PC-3 (cell line): ENCODE measurements at regions of chr4 and their contacts with region 1.

Region 1: DNA sequence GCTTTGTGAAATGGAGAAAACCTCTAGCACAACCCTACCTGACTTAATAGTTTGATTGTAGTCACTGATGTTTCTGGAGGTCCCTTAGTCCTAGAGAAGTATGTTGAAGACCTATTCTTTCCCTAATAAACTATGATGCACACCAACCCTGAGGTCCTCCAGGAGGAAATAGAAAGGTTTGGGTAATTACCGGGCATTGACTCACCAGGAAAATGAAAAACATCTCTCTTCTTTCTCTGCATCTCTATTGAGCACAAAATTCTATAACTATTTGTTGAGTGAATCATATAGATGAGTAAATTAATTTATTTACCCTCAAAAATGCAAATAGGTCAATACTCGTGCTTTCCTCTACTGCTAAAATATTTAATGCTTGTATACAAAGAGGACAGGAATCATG is 582.4 kb upstream of the FAM241A start:
- DNase-seq: peak; percentile 83
- ATAC-seq: peak; percentile 98
- H3K4me3 ChIP-seq: no peak overlapping the region
- H3K27ac ChIP-seq: peak overlapping the region; percentile 92
- H3K4me1 ChIP-seq: peaks cover 20% of the 10 kb centered on the region
- H3K27me3 ChIP-seq: no peaks in the 10 kb centered on the region
- CTCF ChIP-seq: no peak

Region 2: DNA sequence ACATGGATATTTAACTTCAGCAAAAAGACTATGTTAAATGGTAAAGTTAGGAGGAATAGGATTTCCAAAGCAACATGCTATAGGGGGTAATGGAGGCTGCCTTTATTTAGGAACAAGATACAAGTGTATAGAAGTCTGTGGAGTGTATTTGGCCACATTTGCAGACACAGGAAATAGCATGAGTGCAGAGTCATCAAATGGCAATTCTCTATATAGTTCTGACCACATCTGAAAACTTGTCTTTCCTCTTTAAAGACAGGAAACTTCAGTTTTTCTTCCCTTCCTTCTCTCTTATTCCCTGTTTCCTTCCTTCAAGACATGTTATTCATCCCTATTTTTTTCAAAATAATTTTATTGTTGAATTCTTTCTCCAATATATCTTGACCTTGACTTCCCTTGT is 820.7 kb before region 1 on chr4:
- CTCF ChIA-PET with region 1: no interaction called
- POLR2A ChIA-PET with region 1: no interaction called
- intact Hi-C with region 1: no loop called
- DNase-seq: peak; percentile 24
- ATAC-seq: no peak
- H3K4me3 ChIP-seq: no peak overlapping the region
- H3K27ac ChIP-seq: no peak overlapping the region
- H3K4me1 ChIP-seq: no peaks in the 10 kb centered on the region
- H3K27me3 ChIP-seq: 0 out of 2 replicates have a peak, but pooled peaks cover 13% of the 10 kb centered on the region
- CTCF ChIP-seq: no peak

Region 3: DNA sequence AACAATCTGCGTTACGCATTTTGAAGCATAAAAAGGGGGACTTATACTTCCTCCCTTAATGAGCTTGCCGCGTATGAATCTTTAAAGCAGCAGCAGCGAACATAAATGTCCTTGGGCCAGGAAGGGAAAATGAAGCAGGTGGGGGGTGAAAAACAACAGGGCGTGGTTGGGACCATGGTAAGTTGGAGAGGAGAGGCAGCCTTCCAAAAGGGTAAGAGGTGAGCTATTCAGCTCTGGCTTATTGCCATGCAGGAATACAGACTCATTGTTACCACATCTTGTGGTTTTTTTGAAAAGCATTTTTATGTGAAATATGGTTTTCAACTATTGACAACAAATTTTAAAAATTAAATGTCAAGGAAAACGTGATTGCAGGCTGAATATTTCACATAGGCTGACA is 128.2 kb before region 1 on chr4:
- CTCF ChIA-PET with region 1: no interaction called
- POLR2A ChIA-PET with region 1: no interaction called
- intact Hi-C with region 1: loop called (anchors 10 kb)
- DNase-seq: peak; percentile 80
- ATAC-seq: peak; percentile 81
- H3K4me3 ChIP-seq: no peak overlapping the region
- H3K27ac ChIP-seq: no peak overlapping the region
- H3K4me1 ChIP-seq: peaks cover 21% of the 10 kb centered on the region
- H3K27me3 ChIP-seq: no peaks in the 10 kb centered on the region
- CTCF ChIP-seq: no peak